GM13976 (cell line): ENCODE measurements at regions of chr16 and their contacts with region 1.

Region 1: DNA sequence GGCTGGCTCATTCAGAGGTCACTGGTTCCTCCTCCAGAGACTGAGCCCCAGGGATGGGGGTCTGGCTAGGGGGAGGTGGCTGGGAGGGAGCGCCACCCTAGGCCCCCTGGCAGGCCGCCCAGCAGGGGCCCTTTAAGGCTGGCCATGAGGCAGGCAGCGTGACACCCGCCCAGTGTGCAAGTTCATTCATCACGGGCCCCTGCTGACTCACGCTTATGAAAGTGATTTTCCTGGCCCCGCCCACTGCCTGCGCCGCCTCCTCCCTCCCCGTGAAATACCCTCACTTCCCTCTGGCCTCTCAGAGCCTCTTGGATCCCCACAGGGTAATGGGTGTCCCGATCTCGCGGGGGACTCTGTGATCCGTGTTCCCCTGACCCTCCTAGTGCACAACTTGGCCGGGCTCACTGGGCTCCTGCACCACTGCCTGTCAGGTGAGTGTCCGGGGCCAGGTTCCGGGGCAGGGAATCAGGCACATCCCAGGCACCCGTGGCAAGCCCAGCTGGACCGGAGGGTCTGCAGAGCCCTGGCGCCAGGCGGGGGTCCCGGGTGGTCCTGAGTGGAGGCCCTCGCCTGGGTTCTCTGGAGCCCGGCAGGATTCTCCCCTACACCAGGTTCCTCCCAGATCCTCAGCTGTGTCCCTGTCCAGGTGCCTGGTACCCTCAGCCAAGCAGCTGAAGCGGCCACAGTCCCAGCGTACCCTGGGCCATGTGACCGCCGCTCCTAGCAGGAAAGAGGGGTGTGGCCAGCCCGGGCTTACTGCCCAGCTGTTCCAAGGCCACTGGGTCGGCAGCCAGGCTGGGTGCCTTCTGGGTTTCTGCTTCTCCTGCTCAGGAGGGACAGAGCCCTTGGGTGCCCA is at the start of gene OSGIN1:
- DNase-seq: peak; percentile 91
- CTCF ChIP-seq: no peak

Region 2: GRCh38 chr16:84062734-84063640 is 109.8 kb after region 1 on chr16:
- in situ Hi-C with region 1: loop called (anchors 25 kb)
- DNase-seq: peak; percentile 76
- CTCF ChIP-seq: peak; percentile 52

Region 3: DNA sequence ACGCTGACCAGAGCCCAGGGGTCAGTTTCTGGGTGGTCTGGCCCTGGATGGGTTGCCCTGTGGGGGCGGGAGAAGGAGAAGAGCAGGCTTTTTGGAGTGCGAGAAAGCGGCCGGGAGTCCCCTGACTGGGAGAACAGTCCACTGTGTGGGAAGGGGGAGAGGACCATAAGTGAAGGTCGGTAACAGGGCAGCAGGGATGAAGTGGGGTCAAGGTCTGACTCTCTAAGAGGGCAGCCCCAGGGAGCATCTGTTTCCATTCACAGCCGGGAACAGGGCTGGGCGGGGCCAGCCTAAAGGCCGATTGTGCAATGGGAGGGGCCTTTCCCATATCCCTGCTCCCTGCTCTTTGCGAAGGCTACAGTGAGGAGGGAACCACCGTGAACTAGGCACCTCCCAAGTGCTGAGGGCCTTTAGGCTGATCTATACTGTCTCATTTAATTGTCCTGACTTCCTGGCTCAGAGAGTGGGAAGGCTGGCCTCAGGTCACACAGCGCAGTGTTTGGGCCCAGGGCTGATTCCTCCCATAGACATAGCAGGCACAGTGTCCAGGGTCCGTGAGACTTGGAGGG is 331.1 kb after region 1 on chr16:
- in situ Hi-C with region 1: no loop called
- DNase-seq: no peak
- CTCF ChIP-seq: no peak

Region 4: DNA sequence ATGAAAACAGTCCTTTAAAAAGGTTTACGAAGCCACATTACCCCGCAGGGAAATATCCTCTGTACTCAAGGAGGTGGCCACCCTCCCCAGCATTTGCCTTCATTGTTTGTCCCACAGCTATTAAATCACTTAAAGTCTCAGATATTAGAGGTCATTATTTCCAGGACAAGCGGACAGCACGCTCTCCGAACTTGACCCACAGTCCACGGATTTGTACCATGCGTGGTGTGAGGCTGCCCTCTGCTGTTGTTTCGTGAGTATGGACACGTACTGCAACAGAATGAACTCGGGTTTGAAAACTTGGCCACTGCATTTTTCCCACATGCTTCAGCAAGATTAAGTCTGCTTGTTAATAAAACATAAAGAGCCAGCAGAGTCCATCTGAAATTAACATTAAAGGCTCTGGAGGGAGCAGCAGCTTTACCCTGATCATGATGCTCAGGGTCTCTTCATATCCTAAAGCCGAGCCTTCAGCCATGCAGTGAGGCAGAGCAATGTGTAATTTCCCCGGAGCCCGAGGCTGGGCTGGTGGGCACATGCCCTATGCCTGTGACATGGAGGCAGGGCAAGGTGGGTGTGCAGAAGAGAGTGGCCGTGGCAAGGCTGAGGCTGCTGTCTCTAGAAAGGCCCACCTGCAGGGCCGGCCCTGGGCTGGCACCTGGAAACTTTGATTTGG is 531.5 kb after region 1 on chr16:
- in situ Hi-C with region 1: loop called (anchors 25 kb)
- DNase-seq: no peak
- CTCF ChIP-seq: no peak